GM12878 (cell line): ENCODE measurements at regions of chr10 and their contacts with region 1.

Region 1: DNA sequence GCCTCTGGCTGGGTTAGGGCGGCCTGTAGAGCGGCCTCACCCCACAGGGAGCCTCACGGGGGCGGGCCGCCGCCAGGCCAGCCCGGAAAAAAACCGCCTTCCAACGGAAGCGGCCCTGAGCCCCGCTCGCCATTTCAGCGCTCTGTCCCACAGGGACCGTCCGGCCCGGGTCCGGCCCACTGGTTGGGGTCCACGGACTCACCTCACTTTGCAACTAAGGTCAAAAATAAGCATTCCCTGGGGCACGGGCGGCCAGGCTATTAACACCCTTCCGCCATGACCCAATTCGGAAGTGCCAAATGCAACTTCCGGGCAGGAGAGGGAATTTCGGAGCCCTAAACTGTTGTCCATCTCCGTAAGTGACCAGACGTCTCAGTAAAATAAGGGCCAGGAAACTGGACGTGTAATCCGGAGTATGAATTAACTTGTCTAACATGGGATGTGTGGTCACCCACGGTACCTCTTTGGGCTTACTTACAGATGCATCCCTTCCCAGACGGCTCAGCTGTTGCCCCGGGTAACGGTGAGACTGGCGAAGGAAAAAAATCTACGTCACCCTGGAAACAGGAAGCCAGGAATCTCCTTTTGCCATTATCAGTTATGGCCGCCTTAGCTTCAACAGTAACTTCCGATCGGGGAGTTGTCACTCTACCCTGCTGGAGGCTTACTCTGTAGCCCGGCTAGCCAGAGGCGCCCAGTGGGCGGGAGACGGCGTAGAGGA is at the start of gene BBIP1:
- DNase-seq: peak; percentile 99
- ATAC-seq: peak; percentile 86
- H3K4me3 ChIP-seq: peak within 1 kb of the TSS; percentile 71
- H3K27ac ChIP-seq: peak within 1 kb of the TSS; percentile 96
- H3K4me1 ChIP-seq: peaks cover 7% of the 10 kb centered on the region; the same call in 1 of the 2 replicates
- H3K27me3 ChIP-seq: no peaks in the 10 kb centered on the region
- CTCF ChIP-seq: no peak
- EP300 ChIP-seq: no peak; a peak in 1 of 4 replicates
- POLR2A ChIP-seq: peak; percentile 92
- RAD21 ChIP-seq: no peak
- polyA plus RNA-seq, gene BBIP1: 34.7 to 40.8 TPM

Region 2: GRCh38 chr10:110512461-110513187 is 406.2 kb before region 1 on chr10:
- CTCF ChIA-PET with region 1: no interaction called
- POLR2A ChIA-PET with region 1: no interaction called
- RAD21 ChIA-PET with region 1: no interaction called
- SMC1A ChIA-PET with region 1: no interaction called
- in situ Hi-C with region 1: no loop called
- intact Hi-C with region 1: no loop called
- DNase-seq: no peak
- ATAC-seq: peak; percentile 21
- H3K4me3 ChIP-seq: no peak overlapping the region
- H3K27ac ChIP-seq: no peak overlapping the region
- H3K4me1 ChIP-seq: no peaks in the 10 kb centered on the region
- H3K27me3 ChIP-seq: no peaks in the 10 kb centered on the region
- CTCF ChIP-seq: no peak
- EP300 ChIP-seq: no peak
- POLR2A ChIP-seq: peak; percentile 61
- RAD21 ChIP-seq: no peak

Region 3: GRCh38 chr10:110576220-110576619 is 342.6 kb before region 1 on chr10:
- CTCF ChIA-PET with region 1: no interaction called
- POLR2A ChIA-PET with region 1: no interaction called
- RAD21 ChIA-PET with region 1: no interaction called
- SMC1A ChIA-PET with region 1: no interaction called
- in situ Hi-C with region 1: no loop called
- intact Hi-C with region 1: no loop called
- DNase-seq: no peak
- ATAC-seq: no peak
- H3K4me3 ChIP-seq: no peak overlapping the region
- H3K27ac ChIP-seq: no peak overlapping the region
- H3K4me1 ChIP-seq: no peaks in the 10 kb centered on the region; the same call in 1 of the 2 replicates
- H3K27me3 ChIP-seq: no peaks in the 10 kb centered on the region
- CTCF ChIP-seq: no peak
- EP300 ChIP-seq: no peak
- POLR2A ChIP-seq: no peak
- RAD21 ChIP-seq: no peak

Region 4: DNA sequence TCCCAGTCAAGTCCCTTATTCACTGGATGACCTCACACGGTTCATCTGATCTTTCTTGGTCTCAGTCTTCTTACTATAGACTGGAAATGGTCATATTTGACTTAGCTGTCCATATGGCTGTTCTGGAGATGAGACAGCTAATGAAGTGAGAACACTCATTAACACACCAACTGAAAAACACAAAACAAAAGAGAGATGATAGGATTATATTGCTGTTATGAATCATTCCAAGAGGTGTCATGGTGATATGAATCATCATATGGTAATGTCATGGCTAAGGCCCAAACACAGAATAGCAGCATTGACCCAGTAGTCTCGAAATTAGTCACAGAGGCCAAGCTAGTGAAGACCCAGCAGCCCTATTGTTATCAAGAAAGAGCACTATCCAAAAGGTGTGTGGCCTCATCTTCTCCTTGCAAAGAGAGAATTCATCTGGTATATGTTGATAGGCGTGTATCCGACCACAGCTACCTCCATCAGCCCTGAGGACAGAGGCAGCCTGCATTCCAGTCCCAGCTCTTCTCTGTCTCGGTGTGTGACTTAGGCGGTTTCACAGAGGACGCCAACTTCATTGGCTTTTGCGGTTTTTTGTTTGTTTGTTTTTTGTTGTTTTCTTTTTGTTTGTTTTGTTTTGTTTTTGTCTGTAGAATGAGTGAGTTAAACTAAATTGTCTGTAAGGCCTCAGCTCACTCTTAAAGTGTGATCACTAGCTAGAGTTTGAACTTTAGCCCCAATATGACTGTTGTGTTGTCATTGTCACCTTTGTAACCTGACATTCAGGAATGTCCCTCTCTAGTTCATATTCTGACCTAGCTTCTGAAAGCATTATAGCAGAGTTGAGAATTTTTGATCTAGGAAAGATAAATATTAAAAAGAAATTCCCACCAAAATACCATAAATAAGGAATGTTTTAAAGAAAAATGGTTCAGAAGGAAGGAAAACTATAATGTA is 144.5 kb before region 1 on chr10:
- CTCF ChIA-PET with region 1: no interaction called
- POLR2A ChIA-PET with region 1: interaction called, 11 read pairs
- RAD21 ChIA-PET with region 1: interaction called, 9 read pairs
- SMC1A ChIA-PET with region 1: interaction called, 11 read pairs
- in situ Hi-C with region 1: no loop called
- intact Hi-C with region 1: loop called (anchors 1 kb)
- DNase-seq: peak; percentile 99
- ATAC-seq: peak; percentile 94
- H3K4me3 ChIP-seq: no peak overlapping the region
- H3K27ac ChIP-seq: peak overlapping the region; percentile 85
- H3K4me1 ChIP-seq: peaks cover 22% of the 10 kb centered on the region
- H3K27me3 ChIP-seq: no peaks in the 10 kb centered on the region
- CTCF ChIP-seq: no peak
- EP300 ChIP-seq: peak; percentile 100
- POLR2A ChIP-seq: peak; percentile 38; the same call in 1 of the 2 replicates
- RAD21 ChIP-seq: no peak

Region 5: DNA sequence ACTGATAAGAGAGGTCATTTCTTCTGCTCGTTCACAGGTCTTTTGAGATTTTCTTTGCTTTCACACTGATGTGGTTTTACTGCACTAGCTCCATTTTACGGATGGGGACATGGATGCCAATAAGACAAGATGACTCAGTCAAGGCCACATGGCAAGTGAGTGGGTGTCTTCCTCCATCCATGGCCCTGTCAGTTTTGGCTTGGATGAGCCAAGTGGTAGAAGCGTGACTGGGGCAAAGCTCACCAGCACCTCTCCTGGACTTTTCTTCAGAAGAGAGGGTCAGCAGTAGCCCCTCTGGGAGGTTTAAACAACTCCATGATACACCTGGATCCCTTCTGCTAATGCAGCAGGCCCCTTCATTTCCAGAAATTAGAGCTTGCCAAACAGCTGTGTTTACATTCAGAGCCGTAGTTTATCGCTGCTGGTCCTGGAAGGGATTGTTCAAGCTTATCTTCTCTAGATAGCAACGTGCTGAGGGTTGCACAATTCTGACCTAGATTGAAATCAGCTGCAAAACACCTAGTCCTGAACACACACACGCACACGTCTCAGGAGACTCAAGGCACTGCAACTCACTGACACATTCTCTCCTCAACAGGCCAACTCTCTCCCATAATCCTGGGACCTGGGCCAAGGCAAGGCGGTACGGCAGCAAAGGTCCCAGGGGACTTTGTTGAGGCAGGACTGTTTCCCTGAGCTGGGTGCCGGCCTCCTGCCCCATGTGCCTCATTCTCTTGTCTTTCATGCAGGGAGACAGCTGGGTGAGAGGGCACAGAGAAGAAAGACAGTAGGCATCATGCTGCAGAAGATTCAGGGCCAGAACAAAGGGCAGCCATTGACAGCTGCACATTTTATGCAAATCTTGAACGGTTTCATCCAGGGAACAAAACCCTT is 61.3 kb before region 1 on chr10:
- CTCF ChIA-PET with region 1: interaction called, 3 read pairs
- POLR2A ChIA-PET with region 1: interaction called, 5 read pairs
- RAD21 ChIA-PET with region 1: interaction called, 7 read pairs
- SMC1A ChIA-PET with region 1: interaction called, 11 read pairs
- in situ Hi-C with region 1: no loop called
- intact Hi-C with region 1: no loop called
- DNase-seq: peak; percentile 78
- ATAC-seq: peak; percentile 39
- H3K4me3 ChIP-seq: no peak overlapping the region
- H3K27ac ChIP-seq: peak overlapping the region; percentile 98
- H3K4me1 ChIP-seq: peaks cover 67% of the 10 kb centered on the region
- H3K27me3 ChIP-seq: no peaks in the 10 kb centered on the region
- CTCF ChIP-seq: no peak
- EP300 ChIP-seq: no peak
- POLR2A ChIP-seq: no peak
- RAD21 ChIP-seq: no peak

Region 6: GRCh38 chr10:110871298-110872084 is 47.3 kb before region 1 on chr10 and contains the start of gene PDCD4:
- CTCF ChIA-PET with region 1: no interaction called
- POLR2A ChIA-PET with region 1: interaction called, 19 read pairs
- RAD21 ChIA-PET with region 1: interaction called, 14 read pairs
- SMC1A ChIA-PET with region 1: interaction called, 8 read pairs
- in situ Hi-C with region 1: no loop called
- intact Hi-C with region 1: no loop called
- DNase-seq: peak; percentile 86
- ATAC-seq: peak; percentile 78
- H3K4me3 ChIP-seq: peak within 1 kb of the TSS; percentile 65
- H3K27ac ChIP-seq: peak within 1 kb of the TSS; percentile 99
- H3K4me1 ChIP-seq: peaks cover 48% of the 10 kb centered on the region
- H3K27me3 ChIP-seq: no peaks in the 10 kb centered on the region
- CTCF ChIP-seq: no peak
- EP300 ChIP-seq: no peak
- POLR2A ChIP-seq: peak; percentile 96
- RAD21 ChIP-seq: no peak
- polyA plus RNA-seq, gene PDCD4: 101 to 138 TPM

Region 7: GRCh38 chr10:110901954-110902819 is 16.6 kb before region 1 on chr10:
- CTCF ChIA-PET with region 1: interaction called, 14 read pairs
- POLR2A ChIA-PET with region 1: interaction called, 13 read pairs
- RAD21 ChIA-PET with region 1: interaction called, 19 read pairs
- SMC1A ChIA-PET with region 1: interaction called, 28 read pairs
- in situ Hi-C with region 1: no loop called
- intact Hi-C with region 1: no loop called
- DNase-seq: no peak
- ATAC-seq: peak; percentile 49
- H3K4me3 ChIP-seq: no peak overlapping the region
- H3K27ac ChIP-seq: no peak overlapping the region
- H3K4me1 ChIP-seq: peaks cover 7% of the 10 kb centered on the region; the same call in 1 of the 2 replicates
- H3K27me3 ChIP-seq: no peaks in the 10 kb centered on the region
- CTCF ChIP-seq: no peak
- EP300 ChIP-seq: no peak
- POLR2A ChIP-seq: peak; percentile 12; the same call in 1 of the 2 replicates
- RAD21 ChIP-seq: no peak

Region 8: DNA sequence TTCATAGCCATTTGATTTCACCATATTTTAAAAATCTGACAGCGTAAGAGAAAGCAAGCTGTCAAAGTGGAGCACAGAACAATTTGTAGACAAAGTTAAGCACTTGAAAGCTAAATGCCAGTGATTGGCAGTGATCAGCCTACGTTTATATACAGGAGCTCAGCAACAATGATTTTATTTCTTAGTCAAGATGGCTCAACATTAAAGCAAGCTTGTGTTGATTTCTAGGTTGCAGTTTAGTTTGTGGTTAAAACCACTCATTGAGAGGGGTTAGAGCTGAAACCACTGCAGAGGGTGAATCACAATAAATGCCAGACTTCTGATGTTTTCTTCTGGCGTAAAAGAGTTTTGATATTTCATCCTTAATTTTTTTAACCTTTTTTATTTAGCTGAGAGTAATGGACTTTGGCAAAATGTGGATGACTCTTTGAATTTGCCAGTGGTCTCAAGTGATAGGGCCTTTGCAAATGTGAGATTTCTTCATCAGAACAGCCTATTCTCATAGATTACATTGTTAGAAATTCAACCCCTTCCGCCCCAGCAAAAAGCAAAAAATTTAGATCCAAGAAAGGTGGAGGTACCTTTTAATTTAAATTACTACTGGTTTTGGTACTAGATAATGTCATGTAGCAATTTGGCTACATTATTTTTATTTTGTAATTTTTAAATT is 74.4 kb after region 1 on chr10:
- CTCF ChIA-PET with region 1: interaction called, 3 read pairs
- POLR2A ChIA-PET with region 1: interaction called, 3 read pairs
- RAD21 ChIA-PET with region 1: interaction called, 5 read pairs
- SMC1A ChIA-PET with region 1: interaction called, 7 read pairs
- in situ Hi-C with region 1: no loop called
- intact Hi-C with region 1: loop called (anchors 5 kb)
- DNase-seq: peak; percentile 13
- ATAC-seq: peak; percentile 85
- H3K4me3 ChIP-seq: no peak overlapping the region
- H3K27ac ChIP-seq: peak overlapping the region; percentile 51; the same call in 1 of the 2 replicates
- H3K4me1 ChIP-seq: peaks cover 11% of the 10 kb centered on the region
- H3K27me3 ChIP-seq: no peaks in the 10 kb centered on the region
- CTCF ChIP-seq: no peak
- EP300 ChIP-seq: no peak
- POLR2A ChIP-seq: no peak
- RAD21 ChIP-seq: no peak